Heart right ventricle (tissue), 16 donors: ENCODE measurements at regions of chr2 and their contacts with region 1.

Region 1: GRCh38 chr2:109510136-109511028 is 103.4 kb downstream of the SEPTIN10 start:
- DNase-seq: peak; percentile 70 to 81
- ATAC-seq: peak; percentile 46 to 72 (median 56)
- H3K4me3 ChIP-seq: no peak overlapping the region
- H3K27ac ChIP-seq: no peak overlapping the region
- H3K4me1 ChIP-seq: peaks cover 0 to 14% (median 4%) of the 10 kb centered on the region in 9 donors
- H3K27me3 ChIP-seq: no peaks in the 10 kb centered on the region
- CTCF ChIP-seq: peak; percentile 86 to 96 (median 92)

Region 2: DNA sequence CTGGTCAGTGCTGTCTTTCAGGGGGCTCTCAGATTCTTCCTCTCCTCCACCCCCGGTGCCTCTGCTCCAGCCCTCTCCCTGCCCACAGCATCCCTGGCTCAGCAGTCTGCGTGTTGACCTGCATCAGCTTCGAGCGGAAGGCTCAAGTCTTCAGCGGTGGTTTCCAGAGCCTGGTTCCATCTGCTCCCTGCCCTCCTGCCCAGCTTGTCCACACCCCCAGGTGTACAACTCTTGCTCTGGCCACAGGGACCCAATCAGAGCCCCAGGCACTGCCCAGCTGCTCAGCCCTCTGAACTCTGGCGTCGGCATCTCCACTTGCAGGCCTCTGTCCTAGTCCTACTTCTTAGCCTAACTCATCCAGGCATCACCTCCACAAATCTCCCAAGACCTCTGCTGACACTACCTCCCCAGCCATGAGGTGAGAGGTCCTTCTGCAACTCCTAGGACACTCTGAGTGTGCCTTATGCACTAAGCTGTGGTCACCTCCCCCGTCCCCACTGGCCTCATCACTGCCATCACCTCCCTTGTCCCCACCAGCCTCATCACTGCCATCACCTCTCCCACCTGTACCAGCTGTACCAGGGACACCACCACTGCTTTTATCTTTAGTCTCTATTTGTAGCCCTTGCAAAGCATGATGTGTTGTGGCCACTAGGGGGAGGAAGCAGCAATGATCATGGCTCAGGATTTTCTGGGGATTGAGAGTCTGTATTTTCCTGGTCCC is 582.3 kb before region 1 on chr2:
- intact Hi-C with region 1: loop called in 2 of 10 experiments (anchors 10 kb)
- DNase-seq: no peak
- ATAC-seq: peak in 6 of 8 donors; percentile 13 to 62 (median 34)
- H3K4me3 ChIP-seq: no peak overlapping the region
- H3K27ac ChIP-seq: no peak overlapping the region
- H3K4me1 ChIP-seq: peaks cover 0 to 11% (median 6%) of the 10 kb centered on the region in 9 donors
- H3K27me3 ChIP-seq: peaks cover 0 to 27% (median 0%) of the 10 kb centered on the region in 7 donors
- CTCF ChIP-seq: peak; percentile 44 to 75 (median 68)

Region 3: DNA sequence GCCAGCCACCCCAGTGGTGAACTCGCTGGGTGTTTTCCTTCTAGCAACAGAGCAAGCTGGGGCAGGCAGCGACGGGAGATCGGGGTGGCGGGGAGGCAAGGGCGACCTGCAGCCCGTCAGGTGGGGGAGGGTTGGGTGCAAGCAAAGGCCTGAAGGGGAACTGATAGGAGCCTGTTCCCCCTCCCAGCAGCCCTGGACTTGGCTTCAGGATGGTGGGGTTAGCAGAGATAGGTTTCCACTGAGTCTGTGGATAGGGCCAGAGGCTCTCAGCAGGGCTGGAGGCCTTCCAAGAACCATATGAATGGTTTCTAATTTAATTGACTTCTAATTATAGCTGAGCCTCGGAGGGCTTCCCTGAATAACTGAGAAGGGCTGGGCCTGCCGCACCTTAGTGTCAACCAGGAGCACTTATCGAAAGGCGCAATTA is 576.7 kb before region 1 on chr2:
- intact Hi-C with region 1: loop called in 2 of 10 experiments (anchors 10 kb)
- DNase-seq: peak; percentile 49 to 50
- ATAC-seq: peak; percentile 45 to 82 (median 74)
- H3K4me3 ChIP-seq: no peak overlapping the region
- H3K27ac ChIP-seq: peak overlapping the region in 2 of 10 donors; percentile 19 to 20
- H3K4me1 ChIP-seq: peaks cover 0 to 34% (median 14%) of the 10 kb centered on the region in 9 donors
- H3K27me3 ChIP-seq: peaks cover 0 to 26% (median 0%) of the 10 kb centered on the region in 7 donors
- CTCF ChIP-seq: no peak

Region 4: GRCh38 chr2:109260886-109261700 is 249.3 kb before region 1 on chr2:
- intact Hi-C with region 1: loop called in 1 of 10 experiments (anchors 10 kb)
- DNase-seq: no peak
- ATAC-seq: peak in 1 of 8 donors; percentile 26
- H3K4me3 ChIP-seq: no peak overlapping the region
- H3K27ac ChIP-seq: no peak overlapping the region
- H3K4me1 ChIP-seq: peaks cover 13 to 72% (median 36%) of the 10 kb centered on the region in 9 donors
- H3K27me3 ChIP-seq: no peaks in the 10 kb centered on the region
- CTCF ChIP-seq: peak in 6 of 9 donors; percentile 9 to 45 (median 26)

Region 5: DNA sequence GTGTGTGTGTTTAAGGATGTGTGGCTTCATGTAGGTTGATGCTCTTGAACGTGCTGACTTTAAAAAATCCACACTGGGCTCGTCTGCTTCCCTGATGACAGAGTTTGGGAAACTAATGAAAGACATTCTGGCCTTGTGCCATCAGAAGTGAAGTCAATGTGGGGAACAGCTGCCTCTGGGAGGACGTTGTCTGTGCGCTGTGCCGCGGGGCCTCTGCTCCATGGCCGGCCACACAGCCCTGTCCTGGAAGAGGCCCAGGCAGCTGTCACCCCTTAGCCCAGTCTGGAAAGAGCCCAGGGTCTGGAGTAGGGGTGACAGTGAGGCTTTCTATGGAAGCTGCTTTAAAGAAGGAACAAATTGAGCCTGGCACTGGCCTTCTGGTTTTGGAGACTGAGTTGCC is 225.6 kb before region 1 on chr2:
- intact Hi-C with region 1: loop called in 3 of 10 experiments (anchors 10 kb)
- DNase-seq: peak; percentile 63 to 69
- ATAC-seq: peak; percentile 78 to 90 (median 82)
- H3K4me3 ChIP-seq: no peak overlapping the region
- H3K27ac ChIP-seq: peak overlapping the region in 4 of 10 donors; percentile 3 to 44 (median 28)
- H3K4me1 ChIP-seq: peaks cover 14 to 65% (median 42%) of the 10 kb centered on the region in 9 donors
- H3K27me3 ChIP-seq: no peaks in the 10 kb centered on the region
- CTCF ChIP-seq: no peak

Region 6: GRCh38 chr2:109348671-109349550 is 161.5 kb before region 1 on chr2:
- intact Hi-C with region 1: loop called in 1 of 10 experiments (anchors 5 kb)
- DNase-seq: no peak
- ATAC-seq: peak; percentile 16 to 77 (median 49)
- H3K4me3 ChIP-seq: no peak overlapping the region
- H3K27ac ChIP-seq: peak overlapping the region in 7 of 10 donors; percentile 5 to 61 (median 40)
- H3K4me1 ChIP-seq: peaks cover 17 to 44% (median 37%) of the 10 kb centered on the region in 9 donors
- H3K27me3 ChIP-seq: no peaks in the 10 kb centered on the region
- CTCF ChIP-seq: peak in 1 of 9 donors; percentile 15

Region 7: DNA sequence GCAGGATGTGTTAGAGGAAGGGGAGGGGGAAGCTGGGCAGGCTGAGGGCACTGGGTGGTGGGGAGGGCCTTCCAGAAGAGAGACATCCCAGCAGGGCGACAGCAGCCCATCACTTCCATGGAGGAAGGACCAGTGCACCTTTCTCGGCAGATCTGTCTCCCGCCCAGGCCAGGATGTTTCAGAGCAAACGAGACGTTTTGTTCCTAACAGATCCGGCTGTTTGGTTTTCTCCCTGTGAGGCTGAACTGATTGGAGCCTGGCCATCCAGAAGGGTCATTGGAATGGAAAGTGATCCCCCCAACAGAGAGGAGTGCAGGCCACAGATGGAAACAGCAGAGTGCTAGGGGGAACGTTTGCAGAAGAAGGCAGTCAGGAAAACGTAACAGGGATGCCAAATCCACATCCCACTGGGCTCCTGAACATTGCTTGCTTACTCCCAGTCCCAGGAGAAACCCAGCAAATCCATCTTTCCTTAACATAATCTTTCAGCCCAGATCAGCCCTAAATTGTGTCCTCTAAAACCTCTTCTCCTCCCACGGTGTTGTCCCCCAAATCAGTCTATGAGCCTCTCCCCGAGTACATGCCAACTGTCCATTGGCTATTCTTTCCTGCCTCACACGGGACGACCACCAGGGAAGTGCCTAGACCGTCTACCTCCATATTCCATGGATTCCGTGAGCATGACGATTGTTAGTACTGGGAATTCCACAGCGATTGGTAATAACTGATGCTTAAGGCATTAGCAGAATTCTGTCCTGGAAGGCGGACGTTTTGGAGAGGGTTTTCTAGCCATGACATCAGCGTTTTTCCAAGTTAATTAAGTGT is 23.5 kb before region 1 on chr2:
- intact Hi-C with region 1: no loop called
- DNase-seq: no peak
- ATAC-seq: no peak
- H3K4me3 ChIP-seq: no peak overlapping the region
- H3K27ac ChIP-seq: no peak overlapping the region
- H3K4me1 ChIP-seq: peaks cover 15 to 22% (median 20%) of the 10 kb centered on the region in 9 donors
- H3K27me3 ChIP-seq: no peaks in the 10 kb centered on the region
- CTCF ChIP-seq: no peak

Region 8: GRCh38 chr2:109637749-109638570 is 127.6 kb after region 1 on chr2:
- intact Hi-C with region 1: no loop called
- DNase-seq: no peak
- ATAC-seq: peak in 1 of 8 donors; percentile 34
- H3K4me3 ChIP-seq: no peak overlapping the region
- H3K27ac ChIP-seq: peak overlapping the region in 1 of 10 donors; percentile 80
- H3K4me1 ChIP-seq: peaks cover 0 to 37% (median 0%) of the 10 kb centered on the region in 9 donors
- H3K27me3 ChIP-seq: no peaks in the 10 kb centered on the region
- CTCF ChIP-seq: no peak